Kidney (tissue), 22 donors: ENCODE measurements at regions of chr20 and their contacts with region 1.

Region 1: GRCh38 chr20:58568501-58569240 is 53.5 kb upstream of the APCDD1L start:
- DNase-seq: peak in 3 of 5 donors; percentile 53 to 73 (median 54)
- H3K4me3 ChIP-seq: no peak overlapping the region
- H3K27ac ChIP-seq: no peak overlapping the region
- H3K4me1 ChIP-seq: peaks cover 4 to 8% (median 6%) of the 10 kb centered on the region in 3 donors
- H3K27me3 ChIP-seq: peaks cover 2% of the 10 kb centered on the region
- CTCF ChIP-seq: no peak

Region 2: DNA sequence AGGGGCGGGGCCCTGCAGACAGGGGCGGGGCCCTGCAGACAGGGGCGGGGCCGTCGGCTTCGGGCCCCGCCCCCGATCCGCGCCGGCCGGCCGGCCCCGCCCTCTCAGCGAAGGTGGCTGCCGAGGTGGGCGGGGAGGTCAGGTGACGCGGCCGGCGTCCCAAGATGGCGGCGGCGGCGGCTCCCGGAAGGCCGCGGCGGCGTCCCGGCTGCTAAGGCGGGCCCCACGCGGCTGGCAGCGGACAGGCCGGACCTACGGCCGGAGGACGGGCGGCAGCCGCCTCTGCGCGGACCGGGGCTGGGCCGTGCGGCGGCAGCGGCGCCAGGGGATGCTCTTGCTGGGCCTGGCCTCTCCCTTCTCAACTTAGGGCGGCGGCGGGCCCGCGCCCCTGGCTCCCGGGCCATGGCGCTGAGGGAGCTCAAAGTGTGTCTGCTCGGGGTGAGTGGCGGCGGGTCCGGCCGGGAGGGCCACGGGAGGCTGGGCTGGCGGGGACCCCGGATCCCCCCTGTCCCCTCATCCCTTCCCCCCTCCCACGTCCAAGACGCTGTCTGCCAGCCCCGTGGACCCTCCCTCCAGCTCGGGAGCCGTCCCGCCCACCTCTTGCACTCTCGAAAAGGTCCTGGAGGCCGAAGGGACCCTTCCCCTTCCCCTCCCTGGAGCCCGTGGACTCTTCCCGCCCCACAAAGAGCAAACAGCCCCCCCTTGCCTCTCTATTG is 258.9 kb before region 1 on chr20 and contains the start of gene RAB22A:
- intact Hi-C with region 1: loop called (anchors 5 kb)
- DNase-seq: peak; percentile 71 to 95 (median 84)
- H3K4me3 ChIP-seq: peak within 1 kb of the TSS; percentile 50 to 93 (median 79)
- H3K27ac ChIP-seq: peak within 1 kb of the TSS; percentile 51 to 78
- H3K4me1 ChIP-seq: peaks cover 0 to 6% (median 4%) of the 10 kb centered on the region in 3 donors
- H3K27me3 ChIP-seq: no peaks in the 10 kb centered on the region
- CTCF ChIP-seq: no peak
- total RNA-seq, gene RAB22A: 20.7 TPM